ENCODE measurements at regions of chr1 and their contacts with region 1.

Region 1: DNA sequence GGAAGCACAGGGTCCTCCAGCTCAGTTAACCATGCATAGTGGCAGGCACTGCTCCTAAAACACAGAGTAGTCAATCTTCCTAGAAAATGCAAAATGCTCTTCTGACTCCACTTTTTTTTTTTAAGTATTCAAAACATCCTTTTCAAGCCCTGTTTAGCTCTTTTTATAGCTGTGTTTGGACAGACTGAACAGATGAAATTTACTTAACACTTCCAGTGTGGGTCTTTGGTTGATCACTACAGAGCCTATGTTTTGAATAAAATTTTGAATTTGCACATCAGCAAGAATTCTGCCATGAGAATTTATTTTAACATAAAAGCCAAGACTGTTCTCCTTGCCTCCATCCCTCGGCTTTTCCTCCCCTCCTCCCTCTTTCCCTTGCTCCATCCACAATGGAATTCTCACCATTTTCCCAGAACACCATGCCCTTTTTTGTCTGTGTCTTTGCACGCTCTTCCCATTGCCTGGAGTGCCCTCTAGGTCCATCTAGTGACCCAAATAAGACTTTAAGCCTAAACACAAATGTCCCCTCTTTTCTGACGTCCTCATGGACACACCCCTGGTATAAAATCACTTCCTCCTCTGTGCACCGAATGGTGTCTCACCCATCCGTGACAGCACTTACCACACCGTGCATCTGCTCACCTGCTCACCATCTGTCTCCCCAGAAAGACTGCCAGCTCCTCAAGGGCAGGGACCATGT is 24.0 kb upstream of the CPT2 start:
- DNase-seq: peak in 1 of 3 donors; percentile 54
- ATAC-seq: peak; percentile 87
- H3K4me3 ChIP-seq: no peak overlapping the region
- H3K4me1 ChIP-seq: no peaks in the 10 kb centered on the region
- CTCF ChIP-seq: no peak

Region 2: GRCh38 chr1:53061859-53062707 is 110.5 kb before region 1 on chr1 and contains the start of gene PODN:
- intact Hi-C with region 1: loop called in 1 of 2 experiments (anchors 10 kb)
- DNase-seq: peak in 1 of 3 donors; percentile 64
- ATAC-seq: peak; percentile 20
- H3K4me3 ChIP-seq: no peak within 1 kb of the TSS
- H3K4me1 ChIP-seq: peaks cover 7% of the 10 kb centered on the region
- CTCF ChIP-seq: no peak
- total RNA-seq, gene PODN: 5.8 to 69.2 (median 18.1) TPM